ENCODE measurements at regions of chr11 and their contacts with region 1.

Region 1: DNA sequence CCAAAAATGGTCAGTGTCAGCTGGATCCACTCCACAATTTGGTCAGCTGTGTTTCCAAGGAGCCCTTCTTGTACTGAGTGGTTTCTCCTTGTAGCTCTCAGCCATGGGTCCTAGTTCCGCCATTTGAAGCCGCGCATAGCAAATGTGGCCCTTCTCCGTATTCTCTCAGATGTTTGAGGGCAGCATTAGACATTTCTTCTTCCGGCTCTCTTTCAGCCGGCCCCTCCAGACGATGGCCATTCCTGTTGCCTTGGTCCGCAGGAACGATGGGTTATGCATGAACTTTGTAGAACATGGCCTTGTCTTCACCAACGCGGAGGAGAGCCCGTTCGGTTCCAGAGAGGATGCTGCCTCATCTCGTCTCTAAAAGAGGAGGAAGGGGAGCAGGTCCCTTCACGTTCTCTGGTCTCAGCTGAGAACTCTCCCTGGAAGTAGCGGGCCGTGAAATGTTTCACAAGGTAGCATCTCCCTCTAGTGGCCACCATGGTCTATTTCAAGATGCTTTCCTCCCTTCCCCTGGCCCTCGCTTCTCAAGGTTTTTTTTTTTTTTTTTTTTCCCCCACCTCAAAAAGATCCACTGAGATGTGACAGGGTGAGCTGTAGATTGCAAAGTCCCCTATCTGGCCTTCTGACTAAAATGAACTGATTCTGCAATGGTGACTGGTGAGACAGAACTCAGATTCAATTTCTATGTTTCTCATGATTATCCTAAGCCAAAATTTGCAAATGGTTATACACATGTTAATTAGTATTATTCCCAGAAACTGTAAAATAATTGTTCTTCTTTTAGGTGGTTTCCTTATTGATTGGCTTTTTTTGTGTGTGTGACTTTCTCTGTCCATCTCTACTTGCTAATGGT is 19.8 kb upstream of the PLET1 start:
- DNase-seq: peak; percentile 83
- CTCF ChIP-seq: peak; percentile 77

Region 2: GRCh38 chr11:112219476-112220232 is 60.8 kb before region 1 on chr11:
- in situ Hi-C with region 1: loop called (anchors 5 kb)
- DNase-seq: peak; percentile 72
- CTCF ChIP-seq: peak; percentile 60

Region 3: DNA sequence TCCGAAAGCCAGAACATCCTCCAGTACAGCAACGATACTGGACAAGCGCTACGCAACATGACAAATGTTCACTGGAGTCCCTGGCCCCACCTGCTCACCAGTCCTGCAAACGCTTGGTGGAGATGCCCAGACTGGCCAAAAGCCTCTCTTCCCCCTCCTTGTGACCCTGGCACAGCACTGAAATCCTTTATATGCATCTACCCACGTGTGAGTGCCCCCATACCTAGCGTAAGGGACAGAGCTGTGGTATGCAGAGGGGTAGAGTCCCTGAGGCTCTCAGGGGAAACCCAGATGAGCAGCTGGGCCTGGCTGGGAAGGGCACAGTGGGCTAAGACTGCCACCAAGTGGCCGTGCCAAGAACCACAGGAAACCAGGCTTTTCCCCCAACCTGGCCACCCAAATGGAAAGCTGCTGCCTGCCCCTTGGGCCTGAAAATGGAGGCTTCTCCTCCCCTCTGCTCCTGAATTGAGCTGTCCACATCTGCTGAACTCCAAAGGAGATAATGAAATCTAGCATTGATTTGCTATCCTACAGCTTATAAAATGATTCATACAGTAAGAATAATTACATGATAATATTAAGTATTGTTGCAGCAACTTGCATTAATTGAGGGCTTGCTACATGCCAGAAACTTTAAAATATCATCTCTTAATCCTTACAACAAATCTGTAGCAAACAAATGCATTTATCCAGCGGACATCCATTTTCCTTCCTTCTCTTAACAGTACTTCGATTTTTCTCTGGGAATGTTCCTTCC is 1009.1 kb after region 1 on chr11:
- in situ Hi-C with region 1: loop called (anchors 25 kb)
- DNase-seq: peak; percentile 79
- CTCF ChIP-seq: peak; percentile 84

Measured in GM13976 (cell line).